ENCODE measurements at regions of chr15 and their contacts with region 1.

Region 1: GRCh38 chr15:42691308-42691707 is 45.6 kb downstream of the CDAN1 start:
- DNase-seq: no peak
- H3K4me3 ChIP-seq: no peak overlapping the region
- H3K27ac ChIP-seq: no peak overlapping the region
- H3K4me1 ChIP-seq: no peaks in the 10 kb centered on the region
- H3K27me3 ChIP-seq: no peaks in the 10 kb centered on the region
- CTCF ChIP-seq: no peak
- EP300 ChIP-seq: no peak
- POLR2A ChIP-seq: no peak

Region 2: DNA sequence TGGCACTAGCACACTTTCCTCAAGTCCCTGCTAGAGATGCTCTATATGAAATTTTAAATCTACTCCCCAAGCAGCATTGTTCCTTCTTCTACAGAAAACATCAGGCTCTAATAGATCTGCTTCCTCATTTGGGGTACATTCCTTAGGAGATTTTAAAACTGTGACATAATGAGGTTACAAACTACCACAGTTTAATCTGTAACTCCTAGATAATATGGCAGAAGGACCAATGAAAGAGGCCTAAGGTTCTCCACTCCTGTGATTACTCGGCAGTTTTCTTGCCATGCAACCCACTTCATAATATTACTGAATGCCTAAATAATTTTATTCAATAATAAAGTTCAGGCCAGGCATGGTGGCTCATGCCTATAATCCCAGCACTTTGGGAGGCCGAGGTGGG is 216.5 kb before region 1 on chr15:
- intact Hi-C with region 1: no loop called
- DNase-seq: no peak
- H3K4me3 ChIP-seq: no peak overlapping the region
- H3K27ac ChIP-seq: peak overlapping the region in 1 of 5 donors; percentile 18
- H3K4me1 ChIP-seq: peaks cover 0 to 36% (median 16%) of the 10 kb centered on the region in 4 donors
- H3K27me3 ChIP-seq: no peaks in the 10 kb centered on the region
- CTCF ChIP-seq: no peak
- EP300 ChIP-seq: no peak
- POLR2A ChIP-seq: no peak

Region 3: GRCh38 chr15:42933886-42934667 is 242.8 kb after region 1 on chr15:
- intact Hi-C with region 1: loop called (anchors 10 kb)
- DNase-seq: no peak
- H3K4me3 ChIP-seq: no peak overlapping the region
- H3K27ac ChIP-seq: no peak overlapping the region
- H3K4me1 ChIP-seq: no peaks in the 10 kb centered on the region
- H3K27me3 ChIP-seq: no peaks in the 10 kb centered on the region
- CTCF ChIP-seq: no peak
- EP300 ChIP-seq: no peak
- POLR2A ChIP-seq: no peak

Measured in stomach (tissue), 19 donors.